Activated naive CD4-positive, alpha-beta T cell treated with anti-CD3 and anti-CD28 coated beads for 36 hours (primary cell): ENCODE measurements at regions of chr11 and their contacts with region 1.

Region 1: GRCh38 chr11:62726915-62727763 is at the start of gene HNRNPUL2:
- DNase-seq: peak; percentile 99
- H3K4me3 Mint-ChIP-seq: peak within 1 kb of the TSS; percentile 90
- H3K27ac Mint-ChIP-seq: peak within 1 kb of the TSS; percentile 99
- H3K4me1 Mint-ChIP-seq: peaks cover 46% of the 10 kb centered on the region
- H3K27me3 Mint-ChIP-seq: no peaks in the 10 kb centered on the region
- total RNA-seq, gene HNRNPUL2: 58.6 to 61.5 TPM

Region 2: DNA sequence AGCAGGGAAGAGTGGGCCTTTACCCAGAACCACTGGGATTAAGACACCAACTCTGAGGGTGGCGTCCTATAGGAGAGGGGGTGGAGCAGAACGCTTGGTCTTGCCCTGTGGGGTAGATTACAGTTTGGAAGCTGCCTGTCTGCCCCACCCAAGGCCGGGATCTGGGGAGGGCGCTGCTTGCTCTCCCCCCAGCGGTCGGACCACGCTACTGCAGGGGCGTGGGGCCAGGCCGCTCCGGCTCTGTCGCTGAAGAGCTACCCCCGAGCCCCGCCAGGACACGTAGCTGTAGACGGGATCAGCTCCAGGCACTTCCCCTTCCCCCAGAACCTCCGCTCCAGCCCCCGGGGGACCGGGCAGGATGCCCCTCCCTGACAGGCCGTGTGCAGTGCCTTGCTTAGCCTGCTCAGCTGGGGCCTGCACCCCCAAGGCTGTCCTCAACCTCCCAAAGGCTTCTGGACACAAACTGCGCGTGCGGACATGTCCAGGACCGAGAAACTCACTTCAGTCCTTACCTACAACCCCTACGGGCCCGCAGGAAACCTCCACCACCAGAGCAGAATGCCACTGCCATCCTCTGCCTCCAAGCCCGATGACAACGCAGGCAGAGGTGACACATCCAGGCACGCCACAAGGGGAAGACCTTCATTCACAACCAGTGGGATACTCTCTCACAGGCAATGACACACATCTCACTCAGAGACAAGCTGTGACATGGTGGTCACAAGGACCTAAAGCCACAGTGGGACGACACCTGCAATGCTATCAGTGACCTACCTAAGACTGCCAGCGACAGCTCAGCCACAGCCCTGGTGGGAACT is 184.2 kb before region 1 on chr11:
- CTCF ChIA-PET with region 1: no interaction called
- intact Hi-C with region 1: no loop called
- DNase-seq: peak; percentile 78
- H3K4me3 Mint-ChIP-seq: peak overlapping the region; percentile 32
- H3K27ac Mint-ChIP-seq: no peak overlapping the region
- H3K4me1 Mint-ChIP-seq: peaks cover 70% of the 10 kb centered on the region
- H3K27me3 Mint-ChIP-seq: peaks cover 4% of the 10 kb centered on the region

Region 3: DNA sequence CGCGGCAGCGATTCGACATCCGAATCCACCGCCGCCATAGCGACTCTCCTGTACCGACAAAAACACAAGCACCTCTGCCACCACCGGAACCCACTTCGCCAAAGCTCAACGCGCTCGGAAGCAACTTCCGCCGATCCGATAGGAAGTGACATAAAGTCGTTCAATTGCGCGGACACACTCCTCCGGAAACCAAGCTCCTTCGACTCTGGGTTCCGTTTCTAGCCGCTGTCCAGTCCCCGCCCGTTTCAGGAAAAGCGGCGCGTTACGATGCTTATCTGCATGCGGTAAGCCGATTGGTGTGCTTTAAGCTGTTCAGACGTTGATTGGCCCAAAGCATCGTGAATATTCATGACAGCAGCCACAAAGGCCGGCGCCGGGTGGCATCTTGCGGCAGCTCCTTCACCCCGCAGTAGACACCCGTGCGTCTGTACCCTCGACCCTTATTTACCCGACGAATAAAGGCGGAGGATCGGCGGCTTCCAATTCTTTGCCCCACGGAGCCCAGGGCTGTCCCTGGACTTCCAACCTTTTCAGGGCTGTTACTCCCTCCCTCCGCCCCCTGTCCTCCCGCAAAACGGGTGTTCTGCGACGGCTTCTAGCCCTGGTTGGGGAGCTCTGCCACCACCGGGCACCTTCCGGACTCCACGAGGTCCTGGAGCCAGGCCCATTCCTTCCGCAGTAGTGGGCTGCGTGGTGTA is 135.5 kb before region 1 on chr11 and contains the start of gene TUT1:
- CTCF ChIA-PET with region 1: interaction called, 3 read pairs
- intact Hi-C with region 1: loop called (anchors 1 kb)
- DNase-seq: peak; percentile 98
- H3K4me3 Mint-ChIP-seq: peak within 1 kb of the TSS; percentile 94
- H3K27ac Mint-ChIP-seq: peak within 1 kb of the TSS; percentile 94
- H3K4me1 Mint-ChIP-seq: peaks cover 55% of the 10 kb centered on the region
- H3K27me3 Mint-ChIP-seq: no peaks in the 10 kb centered on the region
- total RNA-seq, gene TUT1: 38.2 to 42.0 TPM

Region 4: DNA sequence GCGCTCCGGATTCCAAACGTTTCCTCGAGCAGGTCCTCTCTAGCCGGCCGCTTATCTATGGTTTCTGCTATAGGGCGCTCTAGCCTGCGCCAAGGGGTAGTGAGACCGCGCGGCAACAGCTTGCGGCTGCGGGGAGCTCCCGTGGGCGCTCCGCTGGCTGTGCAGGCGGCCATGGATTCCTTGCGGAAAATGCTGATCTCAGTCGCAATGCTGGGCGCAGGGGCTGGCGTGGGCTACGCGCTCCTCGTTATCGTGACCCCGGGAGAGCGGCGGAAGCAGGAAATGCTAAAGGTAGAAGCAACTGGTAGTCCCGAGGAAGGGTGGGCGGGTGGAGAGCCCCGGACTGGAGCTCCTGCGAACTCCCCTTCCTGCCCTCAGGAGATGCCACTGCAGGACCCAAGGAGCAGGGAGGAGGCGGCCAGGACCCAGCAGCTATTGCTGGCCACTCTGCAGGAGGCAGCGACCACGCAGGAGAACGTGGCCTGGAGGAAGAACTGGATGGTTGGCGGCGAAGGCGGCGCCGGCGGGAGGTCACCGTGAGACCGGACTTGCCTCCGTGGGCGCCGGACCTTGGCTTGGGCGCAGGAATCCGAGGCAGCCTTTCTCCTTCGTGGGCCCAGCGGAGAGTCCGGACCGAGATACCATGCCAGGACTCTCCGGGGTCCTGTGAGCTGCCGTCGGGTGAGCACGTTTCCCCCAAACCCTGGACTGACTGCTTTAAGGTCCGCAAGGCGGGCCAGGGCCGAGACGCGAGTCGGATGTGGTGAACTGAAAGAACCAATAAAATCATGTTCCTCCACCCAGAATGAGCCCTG is 55.4 kb before region 1 on chr11 and contains the starts of genes LBHD1 and UQCC3:
- CTCF ChIA-PET with region 1: interaction called, 3 read pairs
- intact Hi-C with region 1: loop called (anchors 2 kb)
- DNase-seq: peak; percentile 78
- H3K4me3 Mint-ChIP-seq: peak within 1 kb of the TSS; percentile 99
- H3K27ac Mint-ChIP-seq: peak within 1 kb of the TSS; percentile 98
- H3K4me1 Mint-ChIP-seq: peaks cover 59% of the 10 kb centered on the region
- H3K27me3 Mint-ChIP-seq: no peaks in the 10 kb centered on the region
- total RNA-seq, gene LBHD1: 4.4 to 6.1 TPM
- total RNA-seq, gene UQCC3: 6.0 to 6.4 TPM

Region 5: DNA sequence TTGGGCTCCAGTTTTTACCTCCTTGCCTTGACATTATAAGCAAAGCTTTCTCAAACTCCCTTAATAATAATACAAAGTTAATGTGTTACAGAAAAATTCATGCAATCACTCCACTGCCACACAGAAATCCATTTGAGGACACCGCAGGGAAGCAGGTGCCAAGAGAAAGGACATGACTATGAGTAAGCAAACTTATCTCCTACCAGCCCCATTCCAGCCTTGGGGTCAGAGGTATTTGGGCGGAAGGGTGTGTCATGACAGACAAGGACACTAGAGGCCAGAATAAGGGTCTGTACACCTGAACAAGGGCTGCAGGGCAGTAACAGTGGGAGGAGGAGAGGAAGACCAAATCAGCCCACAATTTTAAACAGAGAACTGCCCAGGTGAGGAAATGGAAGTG is 13.8 kb before region 1 on chr11:
- CTCF ChIA-PET with region 1: no interaction called
- intact Hi-C with region 1: loop called (anchors 1 kb)
- DNase-seq: no peak
- H3K4me3 Mint-ChIP-seq: no peak overlapping the region
- H3K27ac Mint-ChIP-seq: peak overlapping the region; percentile 90
- H3K4me1 Mint-ChIP-seq: peaks cover 54% of the 10 kb centered on the region
- H3K27me3 Mint-ChIP-seq: no peaks in the 10 kb centered on the region

Region 6: GRCh38 chr11:62747475-62748160 is 20.5 kb after region 1 on chr11:
- CTCF ChIA-PET with region 1: no interaction called
- intact Hi-C with region 1: no loop called
- DNase-seq: no peak
- H3K4me3 Mint-ChIP-seq: no peak overlapping the region
- H3K27ac Mint-ChIP-seq: no peak overlapping the region
- H3K4me1 Mint-ChIP-seq: peaks cover 26% of the 10 kb centered on the region
- H3K27me3 Mint-ChIP-seq: no peaks in the 10 kb centered on the region

Region 7: GRCh38 chr11:62787005-62787759 is 60.0 kb after region 1 on chr11 and contains the start of gene TMEM179B:
- CTCF ChIA-PET with region 1: interaction called, 7 read pairs
- intact Hi-C with region 1: loop called (anchors 1 kb)
- DNase-seq: peak; percentile 99
- H3K4me3 Mint-ChIP-seq: peak within 1 kb of the TSS; percentile 92
- H3K27ac Mint-ChIP-seq: peak within 1 kb of the TSS; percentile 93
- H3K4me1 Mint-ChIP-seq: peaks cover 47% of the 10 kb centered on the region
- H3K27me3 Mint-ChIP-seq: no peaks in the 10 kb centered on the region
- total RNA-seq, gene TMEM179B: 13.9 to 15.2 TPM

Region 8: GRCh38 chr11:62841361-62842184 is 114.4 kb after region 1 on chr11:
- CTCF ChIA-PET with region 1: no interaction called
- intact Hi-C with region 1: loop called (anchors 1 kb)
- DNase-seq: peak; percentile 93
- H3K4me3 Mint-ChIP-seq: no peak overlapping the region
- H3K27ac Mint-ChIP-seq: no peak overlapping the region
- H3K4me1 Mint-ChIP-seq: peaks cover 23% of the 10 kb centered on the region
- H3K27me3 Mint-ChIP-seq: no peaks in the 10 kb centered on the region

Region 9: GRCh38 chr11:62880803-62881578 is 153.9 kb after region 1 on chr11 and contains the start of gene SLC3A2:
- CTCF ChIA-PET with region 1: interaction called, 3 read pairs
- intact Hi-C with region 1: loop called (anchors 1 kb)
- DNase-seq: peak; percentile 82
- H3K4me3 Mint-ChIP-seq: peak within 1 kb of the TSS; percentile 100
- H3K27ac Mint-ChIP-seq: peak within 1 kb of the TSS; percentile 100
- H3K4me1 Mint-ChIP-seq: peaks cover 49% of the 10 kb centered on the region
- H3K27me3 Mint-ChIP-seq: no peaks in the 10 kb centered on the region
- total RNA-seq, gene SLC3A2: 419 to 472 TPM